WTC11 (cell line): ENCODE measurements at regions of chr17 and their contacts with region 1.

Region 1: DNA sequence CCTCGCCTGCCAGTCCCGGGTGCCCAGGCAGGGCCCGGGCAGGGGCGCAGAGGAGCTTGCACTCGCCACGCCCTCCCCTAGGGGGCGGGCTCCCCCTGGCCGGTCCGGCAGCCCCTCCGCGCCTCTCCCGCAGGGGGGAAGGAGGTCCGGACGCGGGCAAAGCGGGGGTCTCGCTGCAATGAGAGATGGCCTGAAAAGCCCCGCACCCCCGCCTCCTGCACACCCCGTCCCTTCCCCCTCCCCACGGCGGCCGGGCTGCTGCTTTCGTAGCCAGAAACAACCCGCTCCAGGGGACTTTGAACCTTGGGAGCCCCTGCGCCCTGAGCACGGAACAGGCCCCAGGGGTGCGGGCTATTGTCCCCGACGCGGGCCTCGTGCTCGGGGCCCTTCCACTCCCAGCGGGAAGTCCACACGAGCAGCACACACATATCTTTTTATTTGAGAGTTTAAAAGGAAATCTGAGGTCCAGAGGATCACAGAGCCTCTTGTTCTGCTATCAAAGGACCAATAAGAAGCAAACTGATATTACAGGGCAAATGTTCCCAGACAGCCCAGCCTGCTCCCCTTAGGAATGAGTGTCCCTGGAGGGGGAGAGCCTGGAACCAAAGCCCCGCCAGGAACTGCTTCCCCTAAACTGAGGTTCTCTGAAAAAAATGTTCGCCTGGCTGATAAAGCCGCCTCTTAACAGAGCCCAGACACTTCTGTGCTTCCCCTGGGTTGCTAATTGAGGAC is 5.8 kb upstream of the CBX4 start:
- DNase-seq: peak; percentile 73
- ATAC-seq: peak; percentile 50
- H3K4me3 Mint-ChIP-seq: peak overlapping the region; percentile 61
- H3K27ac Mint-ChIP-seq: no peak overlapping the region
- H3K4me1 Mint-ChIP-seq: peaks cover 13% of the 10 kb centered on the region
- H3K27me3 Mint-ChIP-seq: peaks cover 87% of the 10 kb centered on the region
- CTCF ChIP-seq: peak; percentile 88

Region 2: DNA sequence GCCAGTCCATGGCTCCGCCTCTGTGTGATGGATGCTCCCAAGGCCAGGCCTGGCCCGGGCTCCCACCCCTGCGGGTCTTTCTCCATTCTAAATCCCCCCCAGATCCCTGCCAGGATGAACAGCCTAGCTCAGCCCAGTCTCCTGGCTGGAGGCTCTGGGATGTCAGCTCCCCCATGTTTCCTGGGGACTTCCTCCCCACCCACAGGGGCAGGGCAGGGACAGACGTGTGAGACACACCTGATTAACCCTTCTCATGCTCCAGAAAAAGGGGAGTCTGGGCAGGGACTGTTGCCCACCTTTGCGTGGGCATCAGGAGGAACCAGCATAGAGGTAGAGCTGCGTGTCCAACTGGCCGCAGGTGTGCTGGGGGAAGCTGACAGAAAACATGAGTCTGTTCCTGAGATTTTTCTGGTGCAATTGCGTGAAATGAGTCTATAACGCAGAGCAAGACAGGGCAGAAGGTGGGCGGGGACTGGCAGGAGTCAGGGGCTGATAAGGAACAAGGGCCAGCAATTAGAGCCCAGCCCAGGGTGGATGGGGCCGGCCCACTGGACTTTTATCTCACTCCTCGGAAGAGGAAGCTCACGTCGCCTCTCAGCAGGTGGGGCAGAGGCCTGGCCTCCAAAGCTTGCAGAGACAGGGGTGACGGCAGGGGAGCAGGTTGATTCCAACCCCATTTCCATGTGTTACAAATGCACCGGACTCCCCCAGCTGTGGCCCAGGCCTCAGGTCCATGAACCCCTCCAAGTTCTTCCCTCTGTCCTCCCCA is 472.4 kb before region 1 on chr17:
- CTCF ChIA-PET with region 1: no interaction called
- POLR2A ChIA-PET with region 1: no interaction called
- DNase-seq: no peak
- ATAC-seq: no peak
- H3K4me3 Mint-ChIP-seq: no peak overlapping the region
- H3K27ac Mint-ChIP-seq: no peak overlapping the region; the same call in 1 of the 2 replicates
- H3K4me1 Mint-ChIP-seq: peaks cover 18% of the 10 kb centered on the region
- H3K27me3 Mint-ChIP-seq: no peaks in the 10 kb centered on the region
- CTCF ChIP-seq: no peak

Region 3: DNA sequence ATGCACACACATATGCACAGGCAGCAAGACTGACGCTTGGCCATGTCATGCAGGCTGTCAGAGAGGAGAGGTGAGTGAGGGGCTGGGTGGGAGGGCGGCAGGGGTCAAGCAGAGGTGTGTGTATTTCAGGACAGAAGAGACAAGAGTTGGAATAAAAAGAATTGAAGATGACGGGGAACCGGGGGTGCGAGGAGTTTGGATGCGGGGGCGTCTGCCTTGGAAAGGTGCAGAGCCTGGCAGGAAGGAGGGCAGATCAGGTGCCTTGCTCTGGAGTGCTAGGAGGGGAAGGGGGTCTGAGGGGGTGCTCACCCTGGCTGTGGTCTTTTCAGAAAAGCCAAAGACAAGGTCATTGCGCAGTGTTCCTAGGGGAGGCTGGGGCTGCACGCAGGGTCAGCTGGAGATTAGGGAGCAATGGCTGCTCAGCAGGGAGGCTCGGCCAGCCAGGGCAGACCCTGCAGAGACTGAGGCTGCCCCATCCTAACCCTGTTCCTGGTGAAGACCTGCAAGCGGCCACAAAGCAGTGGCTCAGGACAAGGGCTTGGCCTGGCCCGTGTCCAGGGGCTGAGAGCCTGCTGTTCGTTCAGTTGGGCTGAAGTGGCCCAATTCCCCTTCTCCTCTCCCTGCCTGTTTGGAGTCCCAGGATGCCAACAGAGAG is 17.9 kb after region 1 on chr17:
- CTCF ChIA-PET with region 1: interaction called, 16 read pairs
- POLR2A ChIA-PET with region 1: no interaction called
- DNase-seq: no peak
- ATAC-seq: no peak
- H3K4me3 Mint-ChIP-seq: no peak overlapping the region
- H3K27ac Mint-ChIP-seq: no peak overlapping the region
- H3K4me1 Mint-ChIP-seq: peaks cover 12% of the 10 kb centered on the region
- H3K27me3 Mint-ChIP-seq: no peaks in the 10 kb centered on the region; the same call in 1 of the 2 replicates
- CTCF ChIP-seq: no peak

Region 4: DNA sequence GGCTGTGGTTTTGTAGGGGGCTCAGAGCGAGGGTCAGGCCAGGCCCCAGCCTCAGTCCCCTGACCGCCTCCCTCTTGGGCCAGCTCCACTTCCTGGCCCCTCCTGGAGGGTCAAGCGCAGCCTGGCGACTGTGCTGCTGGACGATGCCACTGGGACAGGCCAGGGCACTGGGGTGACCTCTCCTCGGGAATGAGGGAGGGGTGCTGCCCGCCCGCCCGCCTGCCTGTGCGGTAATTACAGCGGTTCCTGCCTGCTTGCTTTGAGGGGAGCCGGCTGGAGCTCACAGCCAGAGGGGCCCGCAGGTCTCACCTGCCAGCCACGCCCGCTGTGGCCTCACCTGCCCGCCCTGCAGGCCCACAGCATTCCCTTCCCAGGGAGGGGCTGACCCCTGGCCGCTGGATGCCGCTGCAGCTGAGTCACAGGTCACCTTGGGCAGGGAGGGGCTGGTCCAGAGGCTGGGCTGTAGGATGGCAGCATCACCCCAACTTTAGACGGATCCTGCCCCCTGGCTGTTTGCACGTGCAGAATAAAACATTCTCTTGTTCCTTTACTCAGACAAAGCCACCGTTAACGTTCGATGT is 70.9 kb after region 1 on chr17:
- CTCF ChIA-PET with region 1: interaction called, 27 read pairs
- POLR2A ChIA-PET with region 1: no interaction called
- DNase-seq: peak; percentile 72
- ATAC-seq: peak; percentile 76
- H3K4me3 Mint-ChIP-seq: no peak overlapping the region
- H3K27ac Mint-ChIP-seq: no peak overlapping the region
- H3K4me1 Mint-ChIP-seq: peaks cover 4% of the 10 kb centered on the region; the same call in 1 of the 2 replicates
- H3K27me3 Mint-ChIP-seq: no peaks in the 10 kb centered on the region
- CTCF ChIP-seq: no peak

Region 5: GRCh38 chr17:79951361-79952264 is 106.6 kb after region 1 on chr17:
- CTCF ChIA-PET with region 1: interaction called, 15 read pairs
- POLR2A ChIA-PET with region 1: interaction called, 3 read pairs
- DNase-seq: no peak
- ATAC-seq: no peak
- H3K4me3 Mint-ChIP-seq: peak overlapping the region; percentile 68
- H3K27ac Mint-ChIP-seq: peak overlapping the region; percentile 100
- H3K4me1 Mint-ChIP-seq: peaks cover 84% of the 10 kb centered on the region
- H3K27me3 Mint-ChIP-seq: no peaks in the 10 kb centered on the region
- CTCF ChIP-seq: no peak

Region 6: DNA sequence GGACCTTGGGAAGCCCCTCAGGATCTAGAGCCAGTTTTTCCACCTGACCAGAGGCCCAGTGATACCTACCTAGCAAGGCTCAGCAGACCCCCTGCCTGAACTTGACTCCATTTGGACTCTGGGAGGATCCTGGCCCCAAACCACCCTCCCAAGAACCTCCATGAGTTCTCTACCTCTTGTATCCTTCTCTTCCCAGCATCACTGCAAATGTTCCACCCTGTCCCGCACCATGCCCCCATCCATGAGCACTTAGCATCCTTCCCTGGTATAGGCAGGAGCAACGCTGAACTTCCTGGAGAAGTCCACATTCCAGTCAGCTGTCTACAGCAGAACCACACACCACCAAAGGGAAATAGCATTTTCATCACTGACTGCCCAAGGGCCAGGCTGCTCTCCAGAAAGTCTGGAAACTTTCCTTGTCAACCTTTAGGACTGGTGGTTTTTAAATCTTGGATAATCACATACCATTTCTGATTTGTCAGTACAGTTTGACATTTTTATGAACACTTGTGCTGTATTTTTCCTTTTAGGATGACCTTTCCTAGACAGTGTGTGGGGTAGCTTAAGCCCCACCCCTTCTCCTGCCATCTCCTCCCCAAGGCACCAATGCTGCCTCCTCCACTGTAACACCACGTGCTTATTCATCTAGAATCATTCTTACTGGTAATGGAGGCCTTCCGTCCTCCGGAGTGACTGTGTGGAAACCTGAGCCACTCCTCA is 288.0 kb after region 1 on chr17:
- CTCF ChIA-PET with region 1: no interaction called
- POLR2A ChIA-PET with region 1: no interaction called
- DNase-seq: no peak
- ATAC-seq: no peak
- H3K4me3 Mint-ChIP-seq: no peak overlapping the region
- H3K27ac Mint-ChIP-seq: no peak overlapping the region; the same call in 1 of the 2 replicates
- H3K4me1 Mint-ChIP-seq: peaks cover 9% of the 10 kb centered on the region
- H3K27me3 Mint-ChIP-seq: no peaks in the 10 kb centered on the region
- CTCF ChIP-seq: no peak